Upper lobe of right lung (tissue), 1 donor: ENCODE measurements at regions of chr17 and their contacts with region 1.

Region 1: DNA sequence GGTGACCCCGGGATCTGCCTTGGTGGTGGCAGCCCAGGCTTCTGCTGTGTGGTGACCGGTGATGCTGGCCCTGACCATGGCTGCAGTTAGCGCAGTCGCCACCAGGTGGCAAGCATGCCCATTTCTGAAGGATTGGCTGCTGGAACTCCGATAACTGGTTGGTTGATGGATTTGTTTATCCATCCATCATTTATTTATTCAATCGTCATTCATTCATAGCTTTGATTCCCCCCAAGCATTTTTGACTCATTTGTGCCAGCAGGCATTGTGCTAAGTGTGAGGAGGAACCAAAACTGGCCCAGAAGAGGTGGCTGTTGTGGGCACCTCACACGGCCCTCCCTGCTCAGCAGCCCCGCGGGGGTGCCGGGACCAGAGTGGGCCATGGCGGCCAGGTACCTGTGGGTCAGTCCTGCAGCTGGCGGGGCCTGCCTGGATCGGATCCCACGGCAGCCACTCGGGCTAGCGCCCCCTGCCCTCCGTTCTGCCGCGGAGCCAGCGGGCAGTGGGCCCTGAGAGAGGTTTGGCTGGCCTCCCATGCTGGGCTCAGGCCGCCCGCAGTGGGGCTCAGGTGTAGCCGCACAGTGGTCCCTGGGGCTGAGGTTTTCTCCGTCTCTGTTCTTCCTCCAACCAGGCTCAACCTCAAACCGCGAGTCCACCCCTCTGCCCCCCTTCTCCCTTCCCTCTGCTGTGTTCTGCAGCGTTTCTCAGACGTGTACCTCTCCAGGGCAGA is 28.8 kb upstream of the ITGA3 start:
- DNase-seq: peak; percentile 92
- ATAC-seq: peak; percentile 89
- H3K4me3 ChIP-seq: peak overlapping the region; percentile 30
- H3K27ac ChIP-seq: peak overlapping the region; percentile 60
- H3K4me1 ChIP-seq: peaks cover 18% of the 10 kb centered on the region
- H3K27me3 ChIP-seq: no peaks in the 10 kb centered on the region
- CTCF ChIP-seq: peak; percentile 96

Region 2: GRCh38 chr17:50087246-50087911 is 60.3 kb after region 1 on chr17:
- intact Hi-C with region 1: loop called (anchors 5 kb)
- DNase-seq: peak; percentile 81
- ATAC-seq: peak; percentile 92
- H3K4me3 ChIP-seq: no peak overlapping the region
- H3K27ac ChIP-seq: no peak overlapping the region
- H3K4me1 ChIP-seq: no peaks in the 10 kb centered on the region
- H3K27me3 ChIP-seq: no peaks in the 10 kb centered on the region
- CTCF ChIP-seq: peak; percentile 96